GM13977 (cell line): ENCODE measurements at regions of chr1 and their contacts with region 1.

Region 1: GRCh38 chr1:148272901-148273300 is 120.8 kb upstream of the NBPF11 start:
- DNase-seq: no peak
- CTCF ChIP-seq: no peak

Region 2: DNA sequence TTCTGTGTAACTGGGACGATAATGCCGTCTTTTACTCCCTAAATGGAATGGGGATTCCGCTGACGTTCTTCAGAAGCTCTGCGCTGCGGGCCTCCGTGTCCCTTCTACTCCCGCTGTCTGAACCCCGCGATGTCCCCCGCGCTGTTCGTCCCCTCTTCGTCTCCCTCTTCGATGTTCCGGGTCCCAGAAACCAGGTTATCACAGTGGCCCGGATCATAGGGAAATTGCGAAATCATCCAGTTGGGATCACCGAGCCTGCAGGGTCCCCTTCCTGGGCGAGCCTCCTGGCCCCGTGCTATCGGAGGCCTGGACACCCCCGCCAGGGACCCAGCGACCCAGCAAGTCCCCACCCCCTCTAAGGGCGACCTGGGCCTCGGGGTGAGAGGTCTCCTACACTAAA is 56.0 kb after region 1 on chr1:
- in situ Hi-C with region 1: loop called (anchors 10 kb)
- DNase-seq: no peak
- CTCF ChIP-seq: no peak